ENCODE measurements at regions of chr5 and their contacts with region 1.

Region 1: DNA sequence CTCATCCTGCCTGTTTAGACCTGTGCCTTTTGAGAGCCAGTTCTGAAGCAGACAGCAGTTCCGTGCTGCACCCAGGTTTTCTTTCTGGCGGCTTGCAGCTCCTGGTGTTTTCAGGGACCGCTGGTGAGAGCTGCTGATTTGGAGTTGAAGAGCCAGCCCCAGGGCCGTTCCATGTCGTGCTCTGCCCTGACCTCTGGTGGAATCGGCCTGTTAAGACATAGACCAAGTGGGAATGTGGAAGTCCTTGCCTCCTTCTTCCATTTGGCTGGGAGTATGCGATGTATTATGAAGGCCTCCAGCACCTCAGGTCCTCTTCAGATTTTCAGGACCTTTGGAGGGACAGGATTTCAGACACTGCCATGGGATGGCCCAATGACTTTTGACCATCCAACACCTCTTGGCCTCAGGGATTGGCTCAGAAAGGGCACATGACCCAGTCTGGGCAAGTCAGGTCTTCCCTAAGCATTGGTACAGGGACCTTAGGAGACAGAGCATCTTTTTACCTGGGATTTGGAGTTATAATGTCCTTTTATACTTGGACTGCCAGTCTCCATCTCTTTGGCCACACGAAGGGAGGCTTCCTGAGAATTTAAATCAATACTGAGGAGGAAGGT is 136.1 kb upstream of the CLINT1 start:
- DNase-seq: peak; percentile 46
- ATAC-seq: peak; percentile 99
- H3K4me3 ChIP-seq: no peak overlapping the region
- H3K27ac ChIP-seq: no peak overlapping the region
- H3K4me1 ChIP-seq: no peaks in the 10 kb centered on the region
- H3K27me3 ChIP-seq: no peaks in the 10 kb centered on the region
- CTCF ChIP-seq: peak; percentile 70 to 88 (median 73); a peak in 5 of 6 replicates
- POLR2A ChIP-seq: no peak
- RAD21 ChIP-seq: peak; percentile 79

Region 2: GRCh38 chr5:156912869-156913268 is 1082.1 kb before region 1 on chr5:
- CTCF ChIA-PET with region 1: no interaction called
- POLR2A ChIA-PET with region 1: no interaction called
- RAD21 ChIA-PET with region 1: no interaction called
- intact Hi-C with region 1: no loop called
- DNase-seq: no peak
- ATAC-seq: no peak
- H3K4me3 ChIP-seq: no peak overlapping the region
- H3K27ac ChIP-seq: no peak overlapping the region
- H3K4me1 ChIP-seq: no peaks in the 10 kb centered on the region
- H3K27me3 ChIP-seq: peaks cover 48% of the 10 kb centered on the region
- CTCF ChIP-seq: no peak
- POLR2A ChIP-seq: no peak
- RAD21 ChIP-seq: no peak

Region 3: DNA sequence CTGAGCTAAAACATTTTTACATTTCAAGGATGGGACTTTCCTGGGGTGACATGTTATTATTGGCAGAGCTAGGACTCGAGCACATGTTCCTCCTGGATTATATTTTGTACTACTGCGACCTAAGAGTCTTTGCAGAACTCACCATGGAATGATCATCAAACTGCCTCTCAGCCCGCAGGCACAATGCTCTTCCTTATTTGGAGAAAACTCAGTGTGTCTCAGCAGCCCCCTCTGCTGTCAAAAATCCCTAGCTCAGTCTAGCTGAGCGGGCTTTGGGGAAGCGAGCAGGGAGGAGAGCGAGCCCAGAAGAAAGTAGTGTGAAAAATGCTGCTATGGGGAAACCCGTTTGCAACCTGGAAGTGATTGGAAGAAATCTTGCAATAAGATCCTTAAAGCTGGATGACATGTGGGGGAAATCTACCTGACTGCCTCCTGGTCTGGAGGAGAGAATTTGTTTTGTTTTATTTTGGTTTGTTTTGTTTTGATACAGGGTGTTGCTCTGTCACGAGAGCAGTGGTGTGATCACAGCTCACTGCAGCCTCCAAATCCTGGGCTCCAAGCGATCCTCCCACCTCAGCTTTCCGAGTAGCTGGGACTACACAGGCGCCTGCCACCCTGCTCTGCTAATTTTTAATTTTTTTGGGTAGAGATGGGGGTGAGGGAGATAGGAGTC is 46.1 kb before region 1 on chr5:
- CTCF ChIA-PET with region 1: interaction called, 9 read pairs
- POLR2A ChIA-PET with region 1: no interaction called
- RAD21 ChIA-PET with region 1: no interaction called
- intact Hi-C with region 1: loop called (anchors 1 kb)
- DNase-seq: peak; percentile 83
- ATAC-seq: peak; percentile 100
- H3K4me3 ChIP-seq: peak overlapping the region in 1 of 2 experiments; percentile 27; a peak in 1 of 4 replicates
- H3K27ac ChIP-seq: no peak overlapping the region
- H3K4me1 ChIP-seq: peaks cover 0 to 9% of the 10 kb centered on the region in 2 experiments; a peak in 1 of 4 replicates
- H3K27me3 ChIP-seq: no peaks in the 10 kb centered on the region
- CTCF ChIP-seq: peak; percentile 81 to 88 (median 88)
- POLR2A ChIP-seq: no peak
- RAD21 ChIP-seq: peak; percentile 67

Region 4: DNA sequence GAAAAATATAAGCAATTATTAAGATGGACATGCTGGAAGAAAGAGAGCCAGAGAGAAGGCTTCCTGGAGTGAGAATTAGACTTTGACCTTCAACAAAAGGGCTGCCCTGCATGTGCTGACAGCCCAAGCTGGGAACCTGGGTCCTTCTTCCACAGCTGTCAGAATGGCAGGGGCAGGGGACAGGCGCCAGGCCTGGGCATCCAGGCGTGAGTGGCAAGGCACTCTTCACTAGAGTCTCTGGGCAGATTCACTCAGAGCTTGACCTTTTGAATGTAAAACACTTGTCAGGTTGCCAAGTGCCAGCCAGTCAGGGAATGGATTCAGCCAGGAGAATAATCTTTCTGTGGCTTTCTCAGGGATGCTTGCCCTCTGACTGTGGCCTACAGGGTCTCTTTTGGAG is 17.0 kb before region 1 on chr5:
- CTCF ChIA-PET with region 1: no interaction called
- POLR2A ChIA-PET with region 1: no interaction called
- RAD21 ChIA-PET with region 1: no interaction called
- intact Hi-C with region 1: no loop called
- DNase-seq: no peak
- ATAC-seq: no peak
- H3K4me3 ChIP-seq: no peak overlapping the region
- H3K27ac ChIP-seq: no peak overlapping the region
- H3K4me1 ChIP-seq: no peaks in the 10 kb centered on the region
- H3K27me3 ChIP-seq: 0 out of 2 replicates have a peak, but pooled peaks cover 3% of the 10 kb centered on the region
- CTCF ChIP-seq: no peak
- POLR2A ChIP-seq: no peak
- RAD21 ChIP-seq: no peak

Region 5: GRCh38 chr5:158340608-158341007 is 345.6 kb after region 1 on chr5:
- CTCF ChIA-PET with region 1: no interaction called
- POLR2A ChIA-PET with region 1: no interaction called
- RAD21 ChIA-PET with region 1: no interaction called
- intact Hi-C with region 1: no loop called
- DNase-seq: no peak
- ATAC-seq: no peak
- H3K4me3 ChIP-seq: no peak overlapping the region
- H3K27ac ChIP-seq: no peak overlapping the region
- H3K4me1 ChIP-seq: no peaks in the 10 kb centered on the region
- H3K27me3 ChIP-seq: no peaks in the 10 kb centered on the region
- CTCF ChIP-seq: no peak
- POLR2A ChIP-seq: no peak
- RAD21 ChIP-seq: no peak

Measured in HCT116 (cell line).